ENCODE measurements at regions of chr15 and their contacts with region 1.

Region 1: DNA sequence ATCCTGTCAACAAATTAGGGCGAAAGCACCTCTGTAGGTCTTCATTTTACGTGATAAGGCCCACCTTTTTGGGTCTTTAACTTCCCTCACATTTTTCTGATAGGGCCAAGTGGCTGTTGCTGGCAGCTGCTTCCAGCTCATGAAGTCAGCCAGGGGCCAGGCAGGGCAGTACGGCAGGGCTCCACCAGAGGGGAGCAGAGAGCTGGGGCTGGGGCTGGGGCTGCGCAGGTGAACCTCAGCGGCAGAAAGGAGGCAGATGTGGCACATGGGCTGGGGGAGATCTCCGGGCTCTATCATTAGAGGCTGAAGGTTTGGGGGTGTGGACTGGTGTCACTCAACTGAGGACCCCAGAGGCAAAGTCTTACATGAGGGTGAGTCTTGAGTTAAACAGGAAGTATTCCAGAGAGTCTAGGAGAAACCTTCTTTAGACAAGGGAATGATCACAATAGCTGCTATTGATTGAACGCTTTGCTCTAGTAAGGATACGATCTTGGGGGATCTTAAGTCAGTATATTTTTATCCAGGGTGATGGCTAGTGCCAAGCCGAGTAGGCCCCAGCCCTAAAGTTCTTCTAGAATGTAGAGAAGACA is 62.8 kb upstream of the MEX3B start:
- DNase-seq: no peak
- H3K4me3 ChIP-seq: no peak overlapping the region
- CTCF ChIP-seq: peak; percentile 95

Region 2: GRCh38 chr15:81480645-81481053 is 627.9 kb before region 1 on chr15:
- CTCF ChIA-PET with region 1: interaction called, 25 read pairs
- POLR2A ChIA-PET with region 1: no interaction called
- DNase-seq: no peak
- H3K4me3 ChIP-seq: peak overlapping the region; percentile 29
- CTCF ChIP-seq: peak; percentile 30

Region 3: DNA sequence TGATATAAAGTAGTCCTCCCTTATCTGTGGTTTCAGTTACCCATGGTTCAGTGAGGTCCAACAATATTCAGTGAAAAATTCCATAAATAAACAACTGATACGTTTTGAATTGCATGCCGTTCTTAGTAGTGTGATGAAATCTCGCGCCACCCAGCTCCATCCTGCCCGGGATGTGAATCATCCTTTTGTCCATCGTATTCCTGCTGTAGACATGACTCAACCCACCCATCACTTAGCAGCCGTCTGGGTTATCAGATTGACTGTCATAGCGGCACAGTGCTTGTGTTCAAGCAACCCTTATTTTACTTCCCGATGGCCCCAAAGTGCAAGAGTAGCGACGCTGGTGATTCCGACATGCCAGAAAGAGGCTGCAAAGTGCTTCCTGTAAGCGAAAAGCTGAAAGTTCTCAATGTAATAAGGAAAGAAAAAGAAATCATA is 14.8 kb before region 1 on chr15:
- CTCF ChIA-PET with region 1: interaction called, 46 read pairs
- POLR2A ChIA-PET with region 1: no interaction called
- DNase-seq: peak; percentile 86
- H3K4me3 ChIP-seq: peak overlapping the region; percentile 43
- CTCF ChIP-seq: no peak

Region 4: GRCh38 chr15:82129761-82130160 is 21.2 kb after region 1 on chr15:
- CTCF ChIA-PET with region 1: interaction called, 112 read pairs
- POLR2A ChIA-PET with region 1: interaction called, 5 read pairs
- DNase-seq: peak; percentile 88
- H3K4me3 ChIP-seq: no peak overlapping the region
- CTCF ChIP-seq: no peak

Region 5: GRCh38 chr15:82197733-82198594 is 89.4 kb after region 1 on chr15:
- CTCF ChIA-PET with region 1: interaction called, 107 read pairs
- POLR2A ChIA-PET with region 1: no interaction called
- DNase-seq: no peak
- H3K4me3 ChIP-seq: no peak overlapping the region
- CTCF ChIP-seq: peak; percentile 79

Region 6: GRCh38 chr15:82393671-82394070 is 285.1 kb after region 1 on chr15:
- CTCF ChIA-PET with region 1: no interaction called
- POLR2A ChIA-PET with region 1: no interaction called
- DNase-seq: peak; percentile 17
- H3K4me3 ChIP-seq: no peak overlapping the region
- CTCF ChIP-seq: no peak